ENCODE measurements at regions of chr5 and their contacts with region 1.

Region 1: DNA sequence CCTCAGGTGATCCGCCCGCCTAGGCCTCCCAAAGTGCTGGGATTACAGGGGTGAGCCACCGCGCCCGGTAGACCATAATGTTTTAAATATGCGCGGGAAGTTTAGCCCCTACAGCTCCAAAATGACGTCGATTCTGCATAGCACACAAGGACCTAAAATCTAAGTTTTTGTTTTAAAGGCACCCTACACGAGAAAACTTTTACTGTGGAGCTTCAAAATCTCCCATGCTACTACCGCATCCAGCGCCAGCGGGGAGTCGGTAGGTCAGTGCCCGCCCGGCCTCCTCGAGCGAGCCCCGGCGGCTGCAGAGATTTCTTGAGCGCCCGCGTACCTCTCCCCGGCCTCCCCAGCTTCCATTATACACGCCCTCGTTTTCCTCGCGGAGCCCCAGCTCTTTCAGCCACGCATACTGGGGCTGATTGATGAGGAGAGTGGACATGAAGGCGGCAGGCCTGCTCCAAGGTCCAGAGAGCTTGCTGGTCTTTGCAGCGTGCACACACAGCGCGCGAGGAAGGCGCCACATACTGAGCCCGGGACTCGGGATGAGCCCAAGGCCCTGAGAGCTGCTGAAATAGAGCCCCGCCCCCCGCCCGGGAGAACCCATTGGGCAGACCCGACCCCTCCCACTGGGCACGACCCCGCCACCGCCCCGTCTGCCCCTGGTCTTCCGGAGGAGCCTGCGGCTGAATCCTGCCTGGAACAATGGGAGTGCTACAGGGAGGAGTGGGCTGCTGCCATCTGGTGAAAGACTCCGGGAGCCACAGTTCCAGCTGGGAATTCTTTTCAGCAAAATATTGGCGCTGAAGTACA is at the start of gene ALDH7A1:
- DNase-seq: peak; percentile 81
- H3K4me3 ChIP-seq: peak within 1 kb of the TSS; percentile 56
- CTCF ChIP-seq: peak; percentile 69

Region 2: GRCh38 chr5:126348855-126349635 is 245.8 kb before region 1 on chr5:
- in situ Hi-C with region 1: loop called (anchors 10 kb)
- DNase-seq: no peak
- H3K4me3 ChIP-seq: no peak overlapping the region
- CTCF ChIP-seq: no peak

Region 3: DNA sequence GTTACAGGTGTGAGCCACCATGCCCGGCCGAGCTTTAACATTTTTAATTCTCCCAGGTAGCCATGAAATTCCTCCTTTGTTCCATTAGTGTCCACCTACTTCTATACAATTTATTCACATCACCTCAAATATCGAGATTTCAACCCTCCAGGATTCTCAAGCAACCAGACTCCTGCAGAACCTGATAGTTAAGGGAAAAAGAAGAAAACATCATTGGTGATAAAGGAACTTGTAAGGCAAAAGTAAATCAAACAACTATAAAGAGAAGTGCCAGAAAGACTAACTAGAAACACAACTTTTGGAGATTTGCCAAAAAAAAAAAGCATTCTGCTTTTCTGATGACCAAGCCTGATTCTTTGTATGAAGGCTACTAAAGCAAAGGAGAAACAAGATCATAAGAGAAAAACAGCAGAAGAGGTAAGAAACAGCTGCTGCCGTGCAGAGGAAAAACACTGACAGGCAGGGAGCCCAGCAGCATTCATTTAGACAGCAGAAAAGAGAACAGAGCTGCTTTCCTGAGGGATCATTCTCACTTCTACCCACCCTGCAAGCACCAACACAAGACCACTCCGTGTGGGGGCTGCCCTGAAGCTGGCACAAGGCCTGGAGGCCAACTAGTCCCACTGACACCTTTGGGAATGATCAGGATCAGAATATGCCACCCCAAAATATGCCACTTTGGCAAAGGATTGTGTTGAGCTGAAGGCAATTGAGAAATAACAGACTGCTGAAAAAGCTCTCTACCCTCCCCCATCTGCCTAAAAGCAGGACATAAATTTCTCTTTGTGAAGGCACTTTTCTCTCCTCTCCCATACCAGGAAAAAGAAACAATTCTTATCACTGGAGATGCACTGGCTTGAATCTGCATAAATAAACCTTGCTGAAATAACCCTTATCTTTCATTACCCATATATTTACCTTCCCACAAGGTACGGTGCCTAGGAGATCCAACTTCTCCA is 75.0 kb before region 1 on chr5:
- in situ Hi-C with region 1: no loop called
- DNase-seq: no peak
- H3K4me3 ChIP-seq: no peak overlapping the region
- CTCF ChIP-seq: no peak

Region 4: DNA sequence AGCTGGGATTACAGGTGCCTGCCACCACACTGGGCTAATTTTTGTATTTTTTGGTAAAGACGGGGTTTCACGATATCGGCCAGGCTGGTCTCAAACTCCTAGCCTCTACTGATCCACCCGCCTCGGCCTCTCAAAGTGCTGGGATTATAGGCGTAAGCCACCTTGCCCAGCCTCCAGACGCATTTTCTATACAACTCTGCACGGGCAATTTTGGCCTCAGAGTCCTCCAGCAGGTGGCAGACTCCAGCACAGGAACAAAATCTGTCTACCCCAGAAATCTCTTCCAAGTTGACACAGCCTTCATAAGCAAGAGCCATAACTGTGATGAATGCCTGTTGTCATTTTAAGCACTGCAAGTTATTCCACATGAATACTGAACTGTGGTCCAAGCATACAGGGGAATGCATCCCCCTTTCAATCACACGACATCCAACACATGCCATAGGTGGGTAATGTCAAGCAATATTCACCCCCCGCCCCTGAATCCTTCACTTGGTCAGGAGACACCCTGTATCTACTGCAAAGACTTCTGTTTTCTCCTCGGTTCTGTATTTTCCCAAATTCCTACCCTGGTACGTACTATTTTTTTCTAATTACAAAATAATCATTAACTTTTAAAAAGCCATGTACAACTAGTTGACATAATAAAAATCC is 50.7 kb before region 1 on chr5:
- in situ Hi-C with region 1: loop called (anchors 5 kb)
- DNase-seq: no peak
- H3K4me3 ChIP-seq: no peak overlapping the region
- CTCF ChIP-seq: peak; percentile 69

Measured in astrocyte of the cerebellum (primary cell).